ENCODE measurements at regions of chr2 and their contacts with region 1.

Region 1: GRCh38 chr2:127591221-127591923 is 54.6 kb upstream of the GPR17 start:
- DNase-seq: peak; percentile 49 to 81 (median 64)
- ATAC-seq: peak; percentile 67 to 94 (median 88)
- H3K4me3 ChIP-seq: no peak overlapping the region
- H3K27ac ChIP-seq: no peak overlapping the region
- H3K4me1 ChIP-seq: no peaks in the 10 kb centered on the region
- H3K27me3 ChIP-seq: no peaks in the 10 kb centered on the region
- CTCF ChIP-seq: peak; percentile 87 to 99 (median 94)
- POLR2A ChIP-seq: no peak

Region 2: DNA sequence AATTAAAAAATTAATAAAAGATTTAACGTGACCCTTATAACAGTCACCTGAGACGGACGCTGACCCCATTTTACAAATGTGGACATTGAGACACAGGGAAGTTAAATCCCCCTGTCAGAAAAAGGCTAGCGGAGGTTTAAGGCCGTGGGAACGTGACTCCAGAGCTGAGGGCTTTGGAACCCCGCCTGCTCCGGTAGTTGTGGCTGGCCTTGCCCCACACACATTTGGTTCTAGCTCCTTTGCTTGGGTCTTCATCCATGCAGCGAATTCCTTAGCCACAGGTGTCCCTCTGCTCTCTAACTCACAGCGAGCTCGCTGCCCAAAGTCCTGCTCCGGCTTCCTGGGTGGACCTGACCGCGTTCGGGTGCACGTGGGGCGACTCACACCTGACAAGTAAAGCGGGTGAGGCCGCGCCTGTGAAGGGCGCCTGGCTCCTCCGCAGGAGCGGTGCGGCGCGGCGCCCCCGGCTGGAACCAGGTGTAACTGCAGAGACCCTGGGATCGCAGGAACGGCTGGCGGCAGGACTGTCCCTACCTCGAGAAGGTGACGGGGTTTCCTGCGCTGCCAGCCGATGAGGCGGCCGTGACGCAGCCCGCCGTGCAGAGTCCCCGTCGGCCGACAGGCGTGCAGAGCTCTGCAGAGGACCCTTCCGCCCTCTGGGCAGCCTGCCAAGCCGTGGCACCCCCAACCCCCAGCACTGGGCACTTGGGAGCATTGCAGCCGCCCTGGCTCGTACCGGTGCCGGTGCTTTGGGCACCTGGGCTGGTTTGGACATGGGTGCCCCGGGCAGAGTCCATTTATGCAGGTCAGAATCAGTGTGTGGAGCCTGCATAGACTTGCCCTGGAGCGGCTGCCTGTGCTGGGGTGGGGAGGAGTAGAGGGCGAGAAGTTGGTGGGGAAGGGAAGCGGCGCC is 175.5 kb before region 1 on chr2:
- intact Hi-C with region 1: no loop called
- DNase-seq: peak; percentile 53 to 79 (median 60)
- ATAC-seq: peak; percentile 39 to 78 (median 74)
- H3K4me3 ChIP-seq: peak overlapping the region; percentile 19 to 61 (median 48)
- H3K27ac ChIP-seq: no peak overlapping the region
- H3K4me1 ChIP-seq: peaks cover 3 to 50% (median 17%) of the 10 kb centered on the region in 12 donors
- H3K27me3 ChIP-seq: peaks cover 0 to 14% (median 0%) of the 10 kb centered on the region in 9 donors
- CTCF ChIP-seq: peak; percentile 38 to 70 (median 58)
- POLR2A ChIP-seq: no peak

Region 3: GRCh38 chr2:127649684-127650040 is 58.3 kb after region 1 on chr2:
- intact Hi-C with region 1: loop called in 2 of 10 experiments (anchors 5 kb)
- DNase-seq: peak; percentile 84 to 93 (median 85)
- ATAC-seq: peak; percentile 8 to 38 (median 18)
- H3K4me3 ChIP-seq: no peak overlapping the region
- H3K27ac ChIP-seq: peak overlapping the region; percentile 50 to 98 (median 84)
- H3K4me1 ChIP-seq: peaks cover 29 to 91% (median 80%) of the 10 kb centered on the region in 12 donors
- H3K27me3 ChIP-seq: no peaks in the 10 kb centered on the region
- CTCF ChIP-seq: peak; percentile 73 to 93 (median 88)
- POLR2A ChIP-seq: no peak

Region 4: GRCh38 chr2:127681288-127681804 is 90.0 kb after region 1 on chr2:
- intact Hi-C with region 1: loop called in 4 of 10 experiments (anchors 5 to 10 kb)
- DNase-seq: peak in 4 of 5 donors; percentile 63 to 82 (median 70)
- ATAC-seq: peak in 3 of 4 donors; percentile 44 to 74 (median 51)
- H3K4me3 ChIP-seq: peak overlapping the region; percentile 32 to 60 (median 54)
- H3K27ac ChIP-seq: peak overlapping the region; percentile 38 to 82 (median 74)
- H3K4me1 ChIP-seq: peaks cover 0 to 50% (median 36%) of the 10 kb centered on the region in 12 donors
- H3K27me3 ChIP-seq: peaks cover 0 to 5% (median 0%) of the 10 kb centered on the region in 9 donors
- CTCF ChIP-seq: no peak
- POLR2A ChIP-seq: peak in 1 of 2 donors; percentile 66

Region 5: GRCh38 chr2:127810619-127811396 is 219.4 kb after region 1 on chr2 and contains the start of gene WDR33:
- intact Hi-C with region 1: loop called in 1 of 10 experiments (anchors 10 kb)
- DNase-seq: peak; percentile 90 to 95 (median 94)
- ATAC-seq: peak; percentile 98 to 99 (median 99)
- H3K4me3 ChIP-seq: peak within 1 kb of the TSS; percentile 54 to 97 (median 92)
- H3K27ac ChIP-seq: peak within 1 kb of the TSS; percentile 84 to 96 (median 88)
- H3K4me1 ChIP-seq: peaks cover 0 to 49% (median 40%) of the 10 kb centered on the region in 12 donors
- H3K27me3 ChIP-seq: no peaks in the 10 kb centered on the region
- CTCF ChIP-seq: peak in 4 of 12 donors; percentile 18 to 31 (median 25)
- POLR2A ChIP-seq: peak in 1 of 2 donors; percentile 60
- total RNA-seq, gene WDR33: 16.4 to 49.9 (median 42.0) TPM

Region 6: GRCh38 chr2:127857265-127857808 is 266.0 kb after region 1 on chr2:
- intact Hi-C with region 1: loop called in 2 of 10 experiments (anchors 10 kb)
- DNase-seq: no peak
- ATAC-seq: no peak
- H3K4me3 ChIP-seq: peak overlapping the region; percentile 59 to 96 (median 84)
- H3K27ac ChIP-seq: peak overlapping the region in 10 of 12 donors; percentile 44 to 87 (median 76)
- H3K4me1 ChIP-seq: peaks cover 0 to 54% (median 36%) of the 10 kb centered on the region in 12 donors
- H3K27me3 ChIP-seq: no peaks in the 10 kb centered on the region
- CTCF ChIP-seq: no peak
- POLR2A ChIP-seq: no peak

Measured in heart left ventricle (tissue), 16 donors.